Activated CD4-positive, alpha-beta T cell treated with anti-CD3 and anti-CD28 coated beads, Interleukin-2, amount 10 ng/mL, durations not matched to agents 24 days and 14 days (primary cell): ENCODE measurements at regions of chr19 and their contacts with region 1.

Region 1: GRCh38 chr19:1249298-1249989 is 1.1 kb downstream of the MIDN start:
- DNase-seq: peak; percentile 97
- H3K4me3 Mint-ChIP-seq: peak overlapping the region; percentile 76
- H3K27ac Mint-ChIP-seq: peak overlapping the region; percentile 63
- H3K4me1 Mint-ChIP-seq: peaks cover 14% of the 10 kb centered on the region
- H3K27me3 Mint-ChIP-seq: no peaks in the 10 kb centered on the region

Region 2: GRCh38 chr19:1020868-1021425 is 228.5 kb before region 1 on chr19 and contains the start of gene TMEM259:
- intact Hi-C with region 1: loop called (anchors 2 kb)
- DNase-seq: peak; percentile 99
- H3K4me3 Mint-ChIP-seq: peak within 1 kb of the TSS; percentile 98
- H3K27ac Mint-ChIP-seq: peak within 1 kb of the TSS; percentile 99
- H3K4me1 Mint-ChIP-seq: peaks cover 26% of the 10 kb centered on the region
- H3K27me3 Mint-ChIP-seq: no peaks in the 10 kb centered on the region
- total RNA-seq, gene TMEM259: 154 and 156 TPM in 2 replicates

Region 3: DNA sequence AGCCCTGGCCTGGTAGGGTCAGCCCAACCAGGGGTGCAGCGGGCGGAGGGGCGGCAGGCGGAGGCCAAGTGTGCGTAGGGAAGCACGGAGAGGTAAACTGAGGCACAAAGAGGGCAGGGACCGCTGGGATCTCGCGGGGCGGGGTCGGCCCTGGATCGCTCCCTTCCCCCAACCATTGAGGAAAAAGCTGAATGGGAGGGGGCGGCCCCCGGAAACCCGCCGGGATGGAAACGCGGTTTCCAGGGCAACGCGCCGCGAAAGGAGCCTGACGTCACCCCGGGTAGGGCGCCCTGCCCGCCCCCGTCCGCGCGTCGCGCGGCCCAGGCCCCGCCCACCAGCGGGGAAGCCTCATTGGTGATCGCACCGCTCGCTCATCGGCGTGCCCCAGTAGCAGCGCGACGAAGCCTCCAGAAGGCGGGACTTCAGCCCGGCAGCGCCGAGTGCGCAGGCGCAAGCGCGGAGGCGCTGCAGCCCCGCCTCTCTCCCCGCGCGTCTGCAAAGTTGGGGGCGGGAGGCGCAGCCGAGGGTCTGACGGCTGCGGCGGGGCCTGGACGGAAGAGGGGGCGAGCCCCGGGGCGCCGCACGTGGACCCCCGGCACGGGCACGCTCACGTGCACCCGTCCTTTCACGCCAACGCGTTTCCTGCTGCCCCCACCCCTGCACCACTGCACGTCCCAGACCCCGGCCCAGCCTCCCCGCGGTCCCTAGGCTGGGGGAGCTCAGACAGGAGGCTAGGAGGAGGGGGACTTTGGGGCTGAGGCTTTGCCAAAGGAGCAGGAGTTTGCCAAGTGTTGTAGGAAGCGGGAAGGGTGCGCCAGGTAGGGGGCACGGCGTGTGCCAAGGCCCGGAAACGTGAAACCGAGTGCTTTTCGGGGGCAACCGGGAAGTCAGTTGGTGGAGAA is 11.4 kb after region 1 on chr19:
- intact Hi-C with region 1: loop called (anchors 1 kb)
- DNase-seq: peak; percentile 99
- H3K4me3 Mint-ChIP-seq: peak overlapping the region; percentile 91
- H3K27ac Mint-ChIP-seq: peak overlapping the region; percentile 92
- H3K4me1 Mint-ChIP-seq: peaks cover 42% of the 10 kb centered on the region
- H3K27me3 Mint-ChIP-seq: no peaks in the 10 kb centered on the region

Region 4: DNA sequence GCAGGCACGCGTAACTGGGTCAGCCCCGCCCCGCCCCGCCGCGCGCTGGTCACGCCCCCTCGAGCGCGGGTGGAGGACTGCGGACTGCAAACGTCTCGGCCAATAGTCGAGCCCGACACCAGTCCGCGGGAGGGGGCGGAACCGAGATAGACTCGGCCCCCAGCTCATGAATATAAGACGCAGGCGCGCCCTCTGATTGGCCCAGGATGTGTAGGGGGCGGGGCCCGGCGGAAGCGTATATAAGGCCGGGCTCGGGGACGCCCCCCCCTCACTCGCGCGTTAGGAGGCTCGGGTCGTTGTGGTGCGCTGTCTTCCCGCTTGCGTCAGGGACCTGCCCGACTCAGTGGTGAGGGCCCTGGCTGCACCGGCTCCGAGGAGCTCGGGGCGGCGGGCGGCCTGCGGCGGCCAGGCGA is 19.6 kb after region 1 on chr19 and contains the start of gene CIRBP:
- intact Hi-C with region 1: loop called (anchors 1 kb)
- DNase-seq: peak; percentile 100
- H3K4me3 Mint-ChIP-seq: peak within 1 kb of the TSS; percentile 95
- H3K27ac Mint-ChIP-seq: peak within 1 kb of the TSS; percentile 94
- H3K4me1 Mint-ChIP-seq: peaks cover 52% of the 10 kb centered on the region
- H3K27me3 Mint-ChIP-seq: no peaks in the 10 kb centered on the region
- total RNA-seq, gene CIRBP: 237 TPM in 2 replicates

Region 5: GRCh38 chr19:1383311-1384084 is 134.1 kb after region 1 on chr19 and contains the start of gene NDUFS7:
- intact Hi-C with region 1: no loop called
- DNase-seq: peak; percentile 98
- H3K4me3 Mint-ChIP-seq: peak within 1 kb of the TSS; percentile 92
- H3K27ac Mint-ChIP-seq: peak within 1 kb of the TSS; percentile 97
- H3K4me1 Mint-ChIP-seq: peaks cover 19% of the 10 kb centered on the region
- H3K27me3 Mint-ChIP-seq: peaks cover 9% of the 10 kb centered on the region
- total RNA-seq, gene NDUFS7: 108 and 110 TPM in 2 replicates